ENCODE measurements at regions of chr15 and their contacts with region 1.

Region 1: DNA sequence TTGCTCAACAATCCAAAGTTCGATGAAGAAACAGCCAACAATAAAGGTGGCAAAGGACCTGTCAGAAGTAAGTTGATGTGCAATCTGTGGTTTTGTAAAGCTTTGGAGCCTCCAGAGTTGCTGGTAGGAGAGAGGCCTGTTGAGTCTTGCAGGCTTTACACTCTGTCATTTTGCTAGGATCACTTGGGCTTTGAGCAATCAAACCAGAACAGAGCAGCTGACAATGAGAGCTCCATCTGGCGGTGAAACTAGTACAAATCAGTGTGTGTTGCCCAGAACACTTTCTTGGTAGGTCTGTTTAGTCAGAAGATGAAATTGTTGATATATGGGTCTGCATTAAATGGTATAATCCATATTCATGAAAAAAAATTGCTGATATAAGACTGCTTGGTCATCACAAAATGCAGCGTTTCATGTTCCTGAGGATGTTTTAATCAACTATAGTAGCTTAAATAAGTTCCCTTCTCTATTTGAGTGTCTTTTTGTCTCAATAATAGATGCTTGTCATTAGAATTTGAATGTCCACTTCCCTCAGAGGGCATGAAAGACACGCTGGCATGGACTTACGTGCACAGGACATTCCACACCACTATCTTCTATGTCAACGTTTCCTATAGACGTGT is 25.7 kb downstream of the TMOD2 start:
- DNase-seq: peak; percentile 94
- H3K4me3 Mint-ChIP-seq: no peak overlapping the region
- H3K27ac Mint-ChIP-seq: no peak overlapping the region
- H3K4me1 Mint-ChIP-seq: peaks cover 27% of the 10 kb centered on the region
- H3K27me3 Mint-ChIP-seq: no peaks in the 10 kb centered on the region
- CTCF ChIP-seq: peak; percentile 47

Region 2: GRCh38 chr15:51536965-51537574 is 240.0 kb before region 1 on chr15:
- CTCF ChIA-PET with region 1: interaction called, 7 read pairs
- POLR2A ChIA-PET with region 1: interaction called, 3 read pairs
- intact Hi-C with region 1: loop called (anchors 5 kb)
- DNase-seq: peak; percentile 30
- H3K4me3 Mint-ChIP-seq: no peak overlapping the region
- H3K27ac Mint-ChIP-seq: no peak overlapping the region
- H3K4me1 Mint-ChIP-seq: no peaks in the 10 kb centered on the region
- H3K27me3 Mint-ChIP-seq: no peaks in the 10 kb centered on the region
- CTCF ChIP-seq: peak; percentile 51

Region 3: GRCh38 chr15:51634591-51635198 is 142.4 kb before region 1 on chr15:
- CTCF ChIA-PET with region 1: interaction called, 10 read pairs
- POLR2A ChIA-PET with region 1: no interaction called
- intact Hi-C with region 1: no loop called
- DNase-seq: no peak
- H3K4me3 Mint-ChIP-seq: no peak overlapping the region
- H3K27ac Mint-ChIP-seq: no peak overlapping the region
- H3K4me1 Mint-ChIP-seq: no peaks in the 10 kb centered on the region
- H3K27me3 Mint-ChIP-seq: no peaks in the 10 kb centered on the region
- CTCF ChIP-seq: no peak

Region 4: DNA sequence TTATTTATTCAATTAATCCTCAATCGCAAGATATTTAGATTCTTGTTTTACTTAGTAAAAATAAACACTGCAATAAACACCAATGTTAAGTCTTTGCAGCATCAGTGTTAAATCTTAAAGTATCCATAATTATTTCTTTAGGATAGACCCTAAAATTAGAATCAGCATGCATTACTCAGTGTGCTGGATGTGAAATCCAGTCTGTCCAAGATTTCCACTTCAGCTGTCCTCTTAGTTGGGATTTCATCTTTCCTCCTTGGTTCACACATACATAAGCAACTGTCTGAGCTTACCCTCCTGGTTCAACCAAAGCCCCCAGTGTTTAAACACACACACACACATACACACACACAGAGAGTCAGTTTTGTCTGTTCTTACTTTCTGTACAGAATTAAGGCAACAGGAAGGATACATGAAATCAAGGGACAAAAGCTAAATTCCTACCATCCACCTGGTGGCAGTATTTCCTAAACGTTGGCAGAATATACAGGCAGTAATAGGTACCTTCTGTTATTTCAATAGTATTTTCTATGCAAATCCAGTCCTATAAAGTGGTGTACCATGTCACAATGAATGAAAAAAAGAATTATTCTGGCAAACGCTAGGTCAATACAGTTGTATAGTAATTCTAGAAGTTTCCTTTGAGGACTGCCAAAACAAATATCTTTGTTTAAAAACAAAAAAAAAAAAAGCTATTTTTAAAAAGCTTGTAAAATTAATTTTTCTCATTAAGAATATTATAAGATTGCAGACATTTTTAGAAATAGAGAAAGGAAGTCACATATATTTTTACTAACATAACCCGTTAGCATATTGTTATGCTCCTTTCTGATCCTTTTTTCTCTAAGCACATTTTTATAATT is 127.2 kb before region 1 on chr15:
- CTCF ChIA-PET with region 1: interaction called, 184 read pairs
- POLR2A ChIA-PET with region 1: interaction called, 49 read pairs
- intact Hi-C with region 1: loop called (anchors 1 kb)
- DNase-seq: peak; percentile 82
- H3K4me3 Mint-ChIP-seq: no peak overlapping the region
- H3K27ac Mint-ChIP-seq: no peak overlapping the region
- H3K4me1 Mint-ChIP-seq: peaks cover 6% of the 10 kb centered on the region
- H3K27me3 Mint-ChIP-seq: peaks cover 11% of the 10 kb centered on the region
- CTCF ChIP-seq: peak; percentile 71

Region 5: GRCh38 chr15:51681303-51681963 is 95.6 kb before region 1 on chr15 and contains the start of gene SCG3:
- CTCF ChIA-PET with region 1: interaction called, 17 read pairs
- POLR2A ChIA-PET with region 1: no interaction called
- intact Hi-C with region 1: no loop called
- DNase-seq: peak; percentile 21
- H3K4me3 Mint-ChIP-seq: no peak within 1 kb of the TSS
- H3K27ac Mint-ChIP-seq: no peak within 1 kb of the TSS
- H3K4me1 Mint-ChIP-seq: peaks cover 11% of the 10 kb centered on the region
- H3K27me3 Mint-ChIP-seq: peaks cover 22% of the 10 kb centered on the region
- CTCF ChIP-seq: no peak
- total RNA-seq, gene SCG3: not detected in 2 replicates

Region 6: GRCh38 chr15:51731549-51732267 is 45.4 kb before region 1 on chr15:
- CTCF ChIA-PET with region 1: interaction called, 40 read pairs
- POLR2A ChIA-PET with region 1: interaction called, 39 read pairs
- intact Hi-C with region 1: loop called (anchors 2 kb)
- DNase-seq: peak; percentile 56
- H3K4me3 Mint-ChIP-seq: peak overlapping the region; percentile 76
- H3K27ac Mint-ChIP-seq: peak overlapping the region; percentile 96
- H3K4me1 Mint-ChIP-seq: peaks cover 31% of the 10 kb centered on the region
- H3K27me3 Mint-ChIP-seq: no peaks in the 10 kb centered on the region
- CTCF ChIP-seq: no peak

Region 7: GRCh38 chr15:51758645-51759044 is 18.4 kb before region 1 on chr15:
- CTCF ChIA-PET with region 1: interaction called, 25 read pairs
- POLR2A ChIA-PET with region 1: interaction called, 5 read pairs
- intact Hi-C with region 1: no loop called
- DNase-seq: peak; percentile 48
- H3K4me3 Mint-ChIP-seq: no peak overlapping the region
- H3K27ac Mint-ChIP-seq: no peak overlapping the region
- H3K4me1 Mint-ChIP-seq: peaks cover 17% of the 10 kb centered on the region
- H3K27me3 Mint-ChIP-seq: peaks cover 2% of the 10 kb centered on the region
- CTCF ChIP-seq: no peak

Region 8: GRCh38 chr15:52154896-52155865 is 378.1 kb after region 1 on chr15:
- CTCF ChIA-PET with region 1: no interaction called
- POLR2A ChIA-PET with region 1: no interaction called
- intact Hi-C with region 1: no loop called
- DNase-seq: no peak
- H3K4me3 Mint-ChIP-seq: no peak overlapping the region
- H3K27ac Mint-ChIP-seq: no peak overlapping the region
- H3K4me1 Mint-ChIP-seq: no peaks in the 10 kb centered on the region
- H3K27me3 Mint-ChIP-seq: no peaks in the 10 kb centered on the region
- CTCF ChIP-seq: no peak

Measured in MCF 10A (cell line).